Caco-2 (cell line): ENCODE measurements at regions of chr7 and their contacts with region 1.

Region 1: GRCh38 chr7:39304668-39305405 is 261.4 kb upstream of the YAE1 start:
- DNase-seq: no peak
- H3K4me3 ChIP-seq: no peak overlapping the region
- H3K4me3 Mint-ChIP-seq: no peak overlapping the region
- H3K27ac Mint-ChIP-seq: no peak overlapping the region
- H3K4me1 ChIP-seq: no peaks in the 10 kb centered on the region
- H3K4me1 Mint-ChIP-seq: no peaks in the 10 kb centered on the region
- H3K27me3 ChIP-seq: no peaks in the 10 kb centered on the region
- H3K27me3 Mint-ChIP-seq: peaks cover 12% of the 10 kb centered on the region
- CTCF ChIP-seq: no peak

Region 2: DNA sequence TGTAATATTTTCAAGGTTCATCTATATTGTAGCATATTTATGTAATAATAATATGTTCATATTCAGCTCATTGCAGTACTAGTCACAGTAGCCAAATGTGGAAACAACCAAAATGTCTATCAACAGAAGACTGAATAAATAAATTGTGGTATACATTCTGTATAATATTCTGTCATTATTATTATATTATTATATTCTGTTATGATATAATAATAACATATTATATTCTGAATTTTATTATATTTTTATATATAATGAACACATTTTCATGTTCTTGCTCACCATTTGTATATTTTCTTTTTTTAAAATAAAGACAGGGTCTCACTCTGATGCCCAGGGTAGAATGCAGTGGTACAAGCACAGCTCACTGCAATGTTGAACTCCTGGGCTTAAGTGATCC is 1218.0 kb before region 1 on chr7:
- CTCF ChIA-PET with region 1: no interaction called
- POLR2A ChIA-PET with region 1: no interaction called
- intact Hi-C with region 1: loop called (anchors 10 kb)
- DNase-seq: no peak
- H3K4me3 ChIP-seq: no peak overlapping the region
- H3K4me3 Mint-ChIP-seq: no peak overlapping the region
- H3K27ac Mint-ChIP-seq: no peak overlapping the region
- H3K4me1 ChIP-seq: no peaks in the 10 kb centered on the region
- H3K4me1 Mint-ChIP-seq: no peaks in the 10 kb centered on the region
- H3K27me3 ChIP-seq: no peaks in the 10 kb centered on the region
- H3K27me3 Mint-ChIP-seq: no peaks in the 10 kb centered on the region
- CTCF ChIP-seq: no peak